Naive thymus-derived CD4-positive, alpha-beta T cell (primary cell): ENCODE measurements at regions of chr7 and their contacts with region 1.

Region 1: DNA sequence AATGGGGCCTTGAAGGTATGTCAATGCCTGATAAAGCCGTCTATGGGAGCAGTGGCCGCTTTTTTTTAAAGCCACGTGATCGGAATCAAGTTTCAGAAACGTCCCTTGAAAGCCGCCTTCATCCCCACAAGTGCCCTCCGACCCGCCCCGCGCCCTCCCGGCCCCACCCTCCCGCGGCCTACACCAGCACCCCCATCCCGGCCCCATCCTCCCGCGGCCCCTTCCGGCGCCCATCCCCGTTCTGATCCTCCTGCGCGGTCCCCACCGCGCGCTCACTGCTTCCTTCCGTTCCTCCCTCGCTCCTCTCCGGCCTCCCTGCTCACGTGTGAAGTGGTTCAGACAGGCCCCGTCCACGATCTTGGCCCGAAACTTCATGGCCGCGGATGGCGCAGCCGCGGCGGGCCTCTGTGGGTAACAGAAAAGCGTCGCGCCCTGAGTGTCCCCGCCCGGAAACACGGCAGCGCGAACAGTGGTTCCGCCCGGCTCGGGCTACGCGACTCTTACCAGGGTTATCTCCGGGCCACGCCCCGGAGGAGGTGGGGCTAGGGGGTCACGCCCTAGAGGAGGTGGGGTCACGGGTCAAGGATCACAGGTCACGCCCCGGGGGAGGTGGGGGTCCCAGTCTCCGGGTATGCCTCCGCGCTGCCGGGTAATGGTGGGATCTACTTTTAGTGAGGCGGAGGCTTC is at the start of gene HUS1:
- DNase-seq: peak; percentile 86 to 95 (median 90)
- ATAC-seq: peak; percentile 100
- H3K4me3 ChIP-seq: peak within 1 kb of the TSS; percentile 90
- H3K4me3 Mint-ChIP-seq: peak within 1 kb of the TSS; percentile 81 to 99 (median 94)
- H3K27ac ChIP-seq: peak within 1 kb of the TSS; percentile 94
- H3K27ac Mint-ChIP-seq: peak within 1 kb of the TSS; percentile 93 to 100 (median 99)
- H3K4me1 ChIP-seq: peaks cover 10 to 13% of the 10 kb centered on the region in 2 donors
- H3K4me1 Mint-ChIP-seq: peaks cover 16 to 38% (median 32%) of the 10 kb centered on the region in 7 donors
- H3K27me3 ChIP-seq: no peaks in the 10 kb centered on the region
- H3K27me3 Mint-ChIP-seq: no peaks in the 10 kb centered on the region
- total RNA-seq, gene HUS1: 39.2 to 84.0 (median 79.2) TPM

Region 2: DNA sequence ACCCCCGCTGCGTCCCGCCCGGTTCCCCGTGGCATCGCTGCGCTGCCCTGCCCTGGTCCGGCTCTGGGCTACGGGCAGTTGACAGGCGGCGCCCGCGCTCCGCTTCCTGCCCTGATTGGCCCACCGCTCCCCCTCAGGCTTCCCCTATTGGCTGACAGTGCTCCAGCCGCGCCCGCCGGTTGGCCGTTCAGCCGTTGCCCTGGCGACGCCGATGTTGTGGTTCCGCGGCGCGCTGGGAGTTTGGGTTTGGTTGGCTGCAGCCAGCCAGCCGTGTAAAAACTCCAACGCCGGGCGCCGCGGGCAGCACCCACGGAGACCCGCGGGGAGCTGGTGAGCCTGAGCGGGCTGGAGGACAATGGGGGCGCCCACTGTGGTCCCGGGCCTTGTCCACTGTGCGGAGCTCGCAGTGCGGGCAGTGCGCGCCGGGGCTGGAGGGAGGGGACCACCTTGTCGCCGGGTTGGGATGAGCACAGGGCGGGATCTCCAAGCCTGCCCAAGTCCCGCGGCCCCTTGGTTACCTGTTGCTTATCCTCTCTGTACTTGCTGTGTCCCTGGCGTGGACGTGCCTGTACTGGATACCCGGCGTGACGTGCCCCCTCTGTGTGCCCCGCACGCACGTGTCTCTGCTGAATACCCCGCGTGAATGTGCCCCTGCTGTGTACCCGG is 56.1 kb after region 1 on chr7 and contains the start of gene C7orf57:
- CTCF ChIA-PET with region 1: no interaction called
- POLR2A ChIA-PET with region 1: no interaction called
- intact Hi-C with region 1: loop called (anchors 1 kb)
- DNase-seq: peak; percentile 80 to 88 (median 83)
- ATAC-seq: peak; percentile 99
- H3K4me3 ChIP-seq: peak within 1 kb of the TSS; percentile 63
- H3K4me3 Mint-ChIP-seq: peak within 1 kb of the TSS; percentile 83 to 92 (median 88)
- H3K27ac ChIP-seq: peak within 1 kb of the TSS; percentile 34
- H3K27ac Mint-ChIP-seq: peak within 1 kb of the TSS in 7 of 9 donors; percentile 71 to 89 (median 80)
- H3K4me1 ChIP-seq: peaks cover 8 to 9% of the 10 kb centered on the region in 2 donors
- H3K4me1 Mint-ChIP-seq: peaks cover 4 to 14% (median 9%) of the 10 kb centered on the region in 7 donors
- H3K27me3 ChIP-seq: peaks cover 0 to 5% of the 10 kb centered on the region in 2 donors
- H3K27me3 Mint-ChIP-seq: peaks cover 9 to 60% (median 22%) of the 10 kb centered on the region in 5 donors
- total RNA-seq, gene C7orf57: 0.17 to 0.80 TPM in 2 of 5 experiments, not detected in the others

Region 3: GRCh38 chr7:48481235-48481634 is 501.9 kb after region 1 on chr7:
- CTCF ChIA-PET with region 1: no interaction called
- POLR2A ChIA-PET with region 1: no interaction called
- intact Hi-C with region 1: no loop called
- DNase-seq: no peak
- ATAC-seq: no peak
- H3K4me3 ChIP-seq: no peak overlapping the region
- H3K4me3 Mint-ChIP-seq: no peak overlapping the region
- H3K27ac ChIP-seq: no peak overlapping the region
- H3K27ac Mint-ChIP-seq: no peak overlapping the region
- H3K4me1 ChIP-seq: no peaks in the 10 kb centered on the region
- H3K4me1 Mint-ChIP-seq: no peaks in the 10 kb centered on the region
- H3K27me3 ChIP-seq: no peaks in the 10 kb centered on the region
- H3K27me3 Mint-ChIP-seq: peaks cover 0 to 3% (median 0%) of the 10 kb centered on the region in 5 donors